ENCODE measurements at regions of chr11 and their contacts with region 1.

Region 1: GRCh38 chr11:66677599-66678375 is at the start of gene RBM4B:
- DNase-seq: peak; percentile 97
- H3K4me3 ChIP-seq: peak within 1 kb of the TSS; percentile 65 to 86 (median 76)
- H3K27ac ChIP-seq: peak within 1 kb of the TSS; percentile 87
- H3K4me1 ChIP-seq: peaks cover 17% of the 10 kb centered on the region
- H3K27me3 ChIP-seq: no peaks in the 10 kb centered on the region
- CTCF ChIP-seq: no peak
- POLR2A ChIP-seq: peak; percentile 79
- total RNA-seq, gene RBM4B: 19.4 and 22.2 TPM in 2 replicates

Region 2: DNA sequence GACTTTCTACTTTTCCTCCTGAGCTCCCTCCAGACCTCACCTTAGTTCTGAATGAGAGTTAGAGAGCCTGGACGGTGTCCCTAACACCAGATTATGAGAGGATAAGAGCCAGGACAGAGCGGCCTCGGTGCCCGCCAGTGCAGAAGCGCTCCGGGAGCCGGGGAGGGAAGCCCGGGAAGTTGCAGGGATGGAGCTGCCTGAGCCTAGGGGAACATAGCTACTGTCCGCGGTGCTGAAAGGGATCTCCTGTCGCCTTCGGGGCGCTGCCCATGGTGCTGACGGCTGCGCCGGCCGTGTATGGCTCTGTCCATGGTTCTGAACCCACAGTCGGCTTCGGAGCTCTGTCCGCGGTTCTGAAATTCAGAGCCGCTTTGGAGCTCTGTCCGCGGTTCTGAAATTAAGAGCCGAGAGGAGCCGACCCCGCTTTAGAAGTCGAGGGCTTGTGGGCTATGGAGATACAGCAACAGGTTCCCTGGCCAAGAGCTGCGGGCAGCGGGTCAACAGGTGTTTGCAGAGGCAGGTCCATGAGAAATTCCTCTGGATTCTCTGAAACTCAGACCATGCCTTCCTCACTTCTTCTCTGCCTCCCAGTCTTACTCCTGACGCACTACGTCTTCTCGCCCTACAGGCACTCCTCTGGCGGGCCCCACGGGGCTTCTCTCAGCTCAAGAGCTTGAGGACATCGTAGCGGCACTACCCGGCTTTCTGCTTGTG is 256.1 kb before region 1 on chr11:
- CTCF ChIA-PET with region 1: interaction called, 12 read pairs
- POLR2A ChIA-PET with region 1: no interaction called
- dilution Hi-C with region 1: no loop called
- intact Hi-C with region 1: no loop called
- DNase-seq: peak; percentile 88
- H3K4me3 ChIP-seq: no peak overlapping the region
- H3K27ac ChIP-seq: no peak overlapping the region
- H3K4me1 ChIP-seq: no peaks in the 10 kb centered on the region
- H3K27me3 ChIP-seq: peaks cover 13 to 17% of the 10 kb centered on the region in 2 experiments
- CTCF ChIP-seq: no peak
- POLR2A ChIP-seq: no peak

Region 3: DNA sequence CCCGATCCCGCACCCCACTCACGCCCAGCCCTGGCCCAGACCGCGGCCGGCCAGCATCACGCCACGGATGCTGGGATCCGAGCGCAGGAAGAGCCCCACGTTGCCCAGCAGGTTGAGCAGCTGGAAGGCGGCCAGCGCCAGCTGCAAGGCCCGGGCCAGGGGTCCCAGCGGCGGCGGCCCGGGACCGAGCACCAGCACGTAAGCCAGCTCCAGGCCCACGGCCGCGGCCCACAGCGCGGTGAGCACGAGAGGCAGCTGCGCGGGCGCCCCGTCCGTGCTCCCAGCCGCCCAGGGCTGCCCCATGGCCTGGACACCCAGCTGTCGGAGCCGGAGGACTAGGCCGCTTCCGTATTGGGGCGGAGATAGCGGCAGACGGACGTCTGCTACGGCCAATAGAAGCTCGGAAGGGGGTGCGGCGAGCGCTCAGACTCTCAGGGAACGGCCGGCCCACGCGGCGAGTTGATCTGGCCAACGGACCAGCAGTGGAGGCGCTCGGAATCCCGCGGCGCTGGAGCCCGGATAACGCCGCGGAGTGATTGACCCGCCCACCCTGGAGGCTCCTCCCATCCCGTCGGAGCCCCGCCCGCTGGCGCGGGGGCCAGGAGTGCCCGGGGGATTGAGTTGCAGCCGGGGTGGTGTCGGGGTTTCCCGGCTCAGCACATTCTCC is 132.0 kb before region 1 on chr11 and contains the start of gene ZDHHC24:
- CTCF ChIA-PET with region 1: interaction called, 28 read pairs
- POLR2A ChIA-PET with region 1: interaction called, 5 read pairs
- dilution Hi-C with region 1: no loop called
- intact Hi-C with region 1: loop called (anchors 1 kb)
- DNase-seq: peak; percentile 99
- H3K4me3 ChIP-seq: peak within 1 kb of the TSS; percentile 70 to 81 (median 78)
- H3K27ac ChIP-seq: peak within 1 kb of the TSS; percentile 62
- H3K4me1 ChIP-seq: peaks cover 33% of the 10 kb centered on the region
- H3K27me3 ChIP-seq: no peaks in the 10 kb centered on the region
- CTCF ChIP-seq: no peak
- POLR2A ChIP-seq: peak; percentile 90
- total RNA-seq, gene ZDHHC24: 18.3 and 20.1 TPM in 2 replicates

Region 4: DNA sequence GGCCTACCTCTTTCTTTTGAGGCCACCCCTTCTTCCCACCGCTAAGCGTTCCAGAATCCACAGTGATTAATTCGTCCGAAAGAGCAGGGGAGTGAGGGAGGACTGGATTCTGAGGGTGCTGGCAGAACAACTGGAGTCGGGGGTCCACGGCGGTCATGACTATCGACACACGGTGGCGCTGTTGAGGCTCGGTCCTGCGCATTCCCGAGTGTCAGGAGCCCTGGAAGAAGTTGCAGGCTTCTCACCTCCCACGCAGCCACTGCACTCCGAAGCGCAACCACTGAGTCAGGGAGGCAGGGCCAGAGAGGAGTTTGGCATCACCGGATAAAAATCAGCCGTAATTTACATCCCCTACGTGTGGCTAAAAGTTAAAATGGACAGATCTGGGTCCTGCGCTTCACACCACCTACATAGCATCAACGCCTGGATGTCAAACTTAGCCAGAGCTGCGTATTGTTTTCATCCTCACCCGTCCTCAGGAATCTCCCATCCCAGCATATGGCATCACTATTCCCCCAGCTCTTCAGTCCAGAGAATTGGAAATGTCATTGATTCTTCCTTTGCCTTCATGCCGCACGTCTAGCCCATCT is 98.7 kb before region 1 on chr11:
- CTCF ChIA-PET with region 1: interaction called, 143 read pairs
- POLR2A ChIA-PET with region 1: interaction called, 6 read pairs
- dilution Hi-C with region 1: no loop called
- intact Hi-C with region 1: loop called (anchors 1 kb)
- DNase-seq: peak; percentile 69
- H3K4me3 ChIP-seq: no peak overlapping the region
- H3K27ac ChIP-seq: no peak overlapping the region
- H3K4me1 ChIP-seq: no peaks in the 10 kb centered on the region
- H3K27me3 ChIP-seq: peaks cover 0 to 2% of the 10 kb centered on the region in 2 experiments
- CTCF ChIP-seq: peak; percentile 76 to 88
- POLR2A ChIP-seq: no peak

Region 5: GRCh38 chr11:66616379-66617154 is 61.2 kb before region 1 on chr11 and contains the start of gene RBM14:
- CTCF ChIA-PET with region 1: interaction called, 14 read pairs
- POLR2A ChIA-PET with region 1: interaction called, 10 read pairs
- dilution Hi-C with region 1: no loop called
- intact Hi-C with region 1: loop called (anchors 1 kb)
- DNase-seq: peak; percentile 99
- H3K4me3 ChIP-seq: peak within 1 kb of the TSS; percentile 55 to 93 (median 75)
- H3K27ac ChIP-seq: peak within 1 kb of the TSS; percentile 86
- H3K4me1 ChIP-seq: peaks cover 24% of the 10 kb centered on the region
- H3K27me3 ChIP-seq: no peaks in the 10 kb centered on the region
- CTCF ChIP-seq: no peak
- POLR2A ChIP-seq: peak; percentile 98
- total RNA-seq, gene RBM14: 95.9 and 104 TPM in 2 replicates

Measured in endothelial cell of umbilical vein (primary cell).